HCT116 (cell line): ENCODE measurements at regions of chr1 and their contacts with region 1.

Region 1: DNA sequence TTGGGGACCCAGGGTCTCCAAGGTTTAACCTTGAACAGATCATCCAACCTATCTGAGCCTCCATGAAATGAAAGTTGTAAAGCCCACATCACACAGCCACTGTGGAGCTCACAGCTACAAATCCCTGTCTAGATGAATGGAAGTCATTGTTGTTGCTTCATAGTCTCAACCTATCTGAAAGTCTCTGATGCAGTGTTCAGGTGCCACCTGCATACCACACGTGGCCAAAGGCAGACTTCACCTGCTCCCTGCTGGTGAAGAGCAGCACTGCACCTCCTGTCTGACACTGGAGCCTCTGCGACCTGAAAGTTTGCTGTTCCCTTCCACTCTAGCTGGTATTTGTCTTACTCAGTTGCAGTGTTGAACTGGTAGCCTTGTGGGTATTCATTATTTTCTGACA is 18.3 kb downstream of the LORICRIN start:
- DNase-seq: peak; percentile 66
- ATAC-seq: peak; percentile 100
- H3K4me3 ChIP-seq: no peak overlapping the region
- H3K27ac ChIP-seq: no peak overlapping the region
- H3K4me1 ChIP-seq: no peaks in the 10 kb centered on the region
- H3K27me3 ChIP-seq: peaks cover 20% of the 10 kb centered on the region; the same call in 1 of the 2 replicates
- CTCF ChIP-seq: peak; percentile 58 to 93 (median 89); a peak in 5 of 6 replicates
- POLR2A ChIP-seq: no peak
- RAD21 ChIP-seq: peak; percentile 71

Region 2: GRCh38 chr1:153238536-153238935 is 39.3 kb before region 1 on chr1:
- CTCF ChIA-PET with region 1: no interaction called
- POLR2A ChIA-PET with region 1: no interaction called
- RAD21 ChIA-PET with region 1: no interaction called
- intact Hi-C with region 1: loop called (anchors 5 kb)
- DNase-seq: peak; percentile 4
- ATAC-seq: peak; percentile 86
- H3K4me3 ChIP-seq: no peak overlapping the region
- H3K27ac ChIP-seq: no peak overlapping the region
- H3K4me1 ChIP-seq: no peaks in the 10 kb centered on the region
- H3K27me3 ChIP-seq: peaks cover 10% of the 10 kb centered on the region; the same call in 1 of the 2 replicates
- CTCF ChIP-seq: peak; percentile 29 to 48 (median 41); a peak in 5 of 6 replicates
- POLR2A ChIP-seq: no peak
- RAD21 ChIP-seq: peak; percentile 35